Activated B cell treated with CpG ODN at 0.5 μM for 24 hours (primary cell): ENCODE measurements at regions of chr3 and their contacts with region 1.

Region 1: GRCh38 chr3:17747174-17747889 is 4.9 kb upstream of the TBC1D5 start:
- DNase-seq: no peak
- ATAC-seq: peak; percentile 42
- H3K4me3 Mint-ChIP-seq: peak overlapping the region; percentile 79
- H3K27ac Mint-ChIP-seq: peak overlapping the region; percentile 90
- H3K4me1 Mint-ChIP-seq: peaks cover 38% of the 10 kb centered on the region
- H3K27me3 Mint-ChIP-seq: no peaks in the 10 kb centered on the region
- CTCF ChIP-seq: no peak

Region 2: GRCh38 chr3:17707813-17708543 is 39.4 kb before region 1 on chr3:
- CTCF ChIA-PET with region 1: no interaction called
- POLR2A ChIA-PET with region 1: no interaction called
- intact Hi-C with region 1: no loop called
- DNase-seq: no peak
- ATAC-seq: no peak
- H3K4me3 Mint-ChIP-seq: no peak overlapping the region
- H3K27ac Mint-ChIP-seq: no peak overlapping the region
- H3K4me1 Mint-ChIP-seq: peaks cover 22% of the 10 kb centered on the region
- H3K27me3 Mint-ChIP-seq: no peaks in the 10 kb centered on the region
- CTCF ChIP-seq: no peak

Region 3: GRCh38 chr3:17782751-17783150 is 35.4 kb after region 1 on chr3:
- CTCF ChIA-PET with region 1: no interaction called
- POLR2A ChIA-PET with region 1: interaction called, 7 read pairs
- intact Hi-C with region 1: loop called (anchors 5 kb)
- DNase-seq: no peak
- ATAC-seq: no peak
- H3K4me3 Mint-ChIP-seq: no peak overlapping the region
- H3K27ac Mint-ChIP-seq: peak overlapping the region; percentile 2
- H3K4me1 Mint-ChIP-seq: peaks cover 35% of the 10 kb centered on the region
- H3K27me3 Mint-ChIP-seq: no peaks in the 10 kb centered on the region
- CTCF ChIP-seq: no peak